ENCODE measurements at regions of chr3 and their contacts with region 1.

Region 1: GRCh38 chr3:58679974-58680666 is 13.5 kb upstream of the FAM3D start:
- DNase-seq: no peak
- H3K4me3 ChIP-seq: no peak overlapping the region
- H3K27ac ChIP-seq: no peak overlapping the region
- H3K4me1 ChIP-seq: peaks cover 4 to 22% (median 15%) of the 10 kb centered on the region in 4 experiments
- H3K27me3 ChIP-seq: no peaks in the 10 kb centered on the region

Region 2: DNA sequence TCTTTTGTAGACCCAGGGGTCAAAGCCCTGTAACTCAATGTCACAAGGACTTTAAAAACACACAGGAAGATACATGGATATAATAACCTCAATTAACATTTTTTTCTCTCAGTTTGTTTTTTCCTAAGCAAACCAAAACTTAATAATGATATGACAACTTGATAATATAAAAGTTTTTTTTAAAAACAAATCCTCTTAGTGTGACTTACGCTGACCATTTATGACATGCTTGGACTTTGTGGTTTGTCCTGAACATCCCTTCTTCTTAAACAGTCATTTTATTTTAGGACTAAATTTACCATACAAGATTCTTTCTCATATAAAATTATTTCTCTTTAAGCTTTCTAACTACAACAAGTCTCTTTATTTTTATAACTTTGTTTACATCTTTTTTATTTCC is 11.9 kb after region 1 on chr3:
- CTCF ChIA-PET with region 1: interaction called, 11 read pairs
- POLR2A ChIA-PET with region 1: no interaction called
- DNase-seq: peak in 2 of 3 donors; percentile 38 to 51
- H3K4me3 ChIP-seq: no peak overlapping the region
- H3K27ac ChIP-seq: no peak overlapping the region
- H3K4me1 ChIP-seq: peaks cover 0 to 11% (median 9%) of the 10 kb centered on the region in 4 experiments
- H3K27me3 ChIP-seq: no peaks in the 10 kb centered on the region

Region 3: GRCh38 chr3:58731673-58732072 is 51.6 kb after region 1 on chr3:
- CTCF ChIA-PET with region 1: no interaction called
- POLR2A ChIA-PET with region 1: no interaction called
- DNase-seq: peak in 1 of 3 donors; percentile 14
- H3K4me3 ChIP-seq: no peak overlapping the region
- H3K27ac ChIP-seq: no peak overlapping the region
- H3K4me1 ChIP-seq: no peaks in the 10 kb centered on the region
- H3K27me3 ChIP-seq: no peaks in the 10 kb centered on the region